Heart right ventricle (tissue), 16 donors: ENCODE measurements at regions of chr20 and their contacts with region 1.

Region 1: DNA sequence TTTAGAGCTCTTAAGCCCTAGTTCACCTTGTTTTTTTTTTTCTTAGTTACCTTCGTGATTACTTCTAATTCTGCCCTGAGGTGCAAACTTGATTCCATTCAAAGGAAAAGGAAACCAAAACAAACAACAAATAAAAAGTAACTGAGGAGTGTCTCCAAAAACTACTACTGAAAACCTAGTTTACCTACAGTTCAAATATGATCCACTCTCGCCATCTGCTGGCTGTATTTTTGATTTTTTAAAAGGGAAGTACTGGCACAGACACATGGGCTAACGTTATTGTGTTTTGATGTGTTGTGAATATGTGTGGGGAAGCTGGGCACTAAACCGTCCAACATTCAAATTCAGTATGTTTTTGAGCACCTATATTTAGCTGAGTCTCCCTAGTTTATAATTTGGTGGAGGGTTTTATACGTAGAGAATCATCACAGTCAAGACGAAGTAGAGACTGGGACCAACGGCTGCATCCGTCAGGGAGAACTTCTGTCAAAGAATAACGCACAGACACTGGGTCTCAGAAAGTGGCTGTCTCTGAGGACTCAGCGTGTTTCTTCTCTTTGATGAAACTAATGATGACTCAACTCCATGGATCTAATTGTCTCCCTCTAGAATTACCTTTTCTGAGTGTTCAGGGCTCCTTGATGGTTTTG is 373.5 kb upstream of the BTBD3 start:
- DNase-seq: peak in 1 of 2 donors; percentile 62
- ATAC-seq: peak in 5 of 8 donors; percentile 48 to 75 (median 74)
- H3K4me3 ChIP-seq: peak overlapping the region in 2 of 10 donors; percentile 5 to 10
- H3K27ac ChIP-seq: no peak overlapping the region
- H3K4me1 ChIP-seq: peaks cover 0 to 12% (median 0%) of the 10 kb centered on the region in 9 donors
- H3K27me3 ChIP-seq: peaks cover 0 to 3% (median 0%) of the 10 kb centered on the region in 7 donors
- CTCF ChIP-seq: peak in 8 of 9 donors; percentile 21 to 79 (median 66)

Region 2: GRCh38 chr20:9616833-9617489 is 1927.2 kb before region 1 on chr20:
- intact Hi-C with region 1: loop called in 7 of 10 experiments (anchors 5 to 10 kb)
- DNase-seq: peak; percentile 24 to 27
- ATAC-seq: peak in 6 of 8 donors; percentile 51 to 71 (median 64)
- H3K4me3 ChIP-seq: no peak overlapping the region
- H3K27ac ChIP-seq: no peak overlapping the region
- H3K4me1 ChIP-seq: no peaks in the 10 kb centered on the region
- H3K27me3 ChIP-seq: peaks cover 0 to 30% (median 7%) of the 10 kb centered on the region in 7 donors
- CTCF ChIP-seq: peak; percentile 51 to 91 (median 89)

Region 3: DNA sequence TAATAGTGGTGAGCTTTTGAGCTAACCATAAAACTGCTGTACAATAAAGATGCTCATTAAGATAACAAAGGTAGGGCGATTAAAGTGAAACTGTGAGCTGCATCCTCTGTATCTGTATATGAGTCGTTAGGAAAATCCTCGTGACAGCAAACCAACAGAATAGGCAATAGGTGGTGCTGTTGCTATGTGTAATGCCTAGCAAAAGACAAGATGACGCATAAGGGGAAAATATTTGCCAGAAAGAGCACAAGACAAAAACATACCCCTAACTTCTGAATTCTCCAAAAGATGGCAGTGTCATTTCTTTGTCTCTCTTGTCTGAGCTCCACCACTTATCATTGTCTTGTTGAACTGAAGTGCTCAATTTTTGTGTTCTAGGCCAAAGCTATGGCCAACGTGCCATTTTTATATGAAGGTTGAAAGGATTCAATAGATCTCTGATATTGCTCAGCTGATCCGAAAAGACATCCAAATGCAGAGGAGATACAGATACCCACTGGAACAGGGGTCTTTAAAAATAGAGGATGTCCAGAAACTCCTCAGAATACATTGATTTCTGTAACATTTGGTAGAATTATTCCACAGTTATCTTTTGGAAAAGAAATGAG is 1565.7 kb before region 1 on chr20:
- intact Hi-C with region 1: loop called in 9 of 10 experiments (anchors 2 to 10 kb)
- DNase-seq: peak in 1 of 2 donors; percentile 64
- ATAC-seq: peak in 7 of 8 donors; percentile 80 to 93 (median 83)
- H3K4me3 ChIP-seq: no peak overlapping the region
- H3K27ac ChIP-seq: no peak overlapping the region
- H3K4me1 ChIP-seq: peaks cover 0 to 6% (median 0%) of the 10 kb centered on the region in 9 donors
- H3K27me3 ChIP-seq: peaks cover 0 to 7% (median 0%) of the 10 kb centered on the region in 7 donors
- CTCF ChIP-seq: peak; percentile 53 to 94 (median 79)

Region 4: GRCh38 chr20:10476319-10476724 is 1067.8 kb before region 1 on chr20:
- intact Hi-C with region 1: loop called in 2 of 10 experiments (anchors 5 to 10 kb)
- DNase-seq: no peak
- ATAC-seq: peak in 6 of 8 donors; percentile 32 to 71 (median 48)
- H3K4me3 ChIP-seq: no peak overlapping the region
- H3K27ac ChIP-seq: no peak overlapping the region
- H3K4me1 ChIP-seq: peaks cover 0 to 44% (median 21%) of the 10 kb centered on the region in 9 donors
- H3K27me3 ChIP-seq: no peaks in the 10 kb centered on the region
- CTCF ChIP-seq: peak in 1 of 9 donors; percentile 22

Region 5: DNA sequence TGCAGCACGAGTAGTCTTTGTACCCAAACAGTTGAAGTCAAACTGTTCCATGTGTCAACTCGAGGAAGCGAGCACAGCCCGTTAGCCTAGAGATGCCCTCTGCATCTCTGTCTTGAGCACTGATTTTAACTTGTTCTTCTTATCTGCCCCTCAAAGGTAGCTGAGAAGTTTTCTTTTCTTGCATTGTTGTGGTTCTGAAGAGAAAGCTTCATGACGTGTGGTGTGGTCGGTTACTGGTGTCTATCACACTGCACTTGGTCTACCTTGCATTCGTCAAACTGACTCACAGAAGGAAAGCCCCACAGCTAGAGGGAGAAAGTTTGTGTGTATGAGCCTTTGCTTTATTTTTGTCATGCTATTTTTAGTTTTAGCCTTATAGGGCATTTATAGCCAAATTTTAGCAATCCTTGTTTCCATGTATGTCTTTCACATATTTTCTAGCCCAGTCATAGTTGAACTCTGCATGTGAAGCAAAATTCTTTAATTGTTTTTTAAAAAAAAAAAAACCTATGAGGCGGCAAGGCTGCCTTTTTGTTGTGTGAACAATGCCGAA is 985.4 kb before region 1 on chr20:
- intact Hi-C with region 1: loop called in 9 of 10 experiments (anchors 2 to 10 kb)
- DNase-seq: no peak
- ATAC-seq: peak in 3 of 8 donors; percentile 42 to 65 (median 47)
- H3K4me3 ChIP-seq: no peak overlapping the region
- H3K27ac ChIP-seq: peak overlapping the region in 4 of 10 donors; percentile 2 to 25 (median 16)
- H3K4me1 ChIP-seq: peaks cover 0 to 11% (median 0%) of the 10 kb centered on the region in 9 donors
- H3K27me3 ChIP-seq: no peaks in the 10 kb centered on the region
- CTCF ChIP-seq: peak in 3 of 9 donors; percentile 15 to 29 (median 24)

Region 6: DNA sequence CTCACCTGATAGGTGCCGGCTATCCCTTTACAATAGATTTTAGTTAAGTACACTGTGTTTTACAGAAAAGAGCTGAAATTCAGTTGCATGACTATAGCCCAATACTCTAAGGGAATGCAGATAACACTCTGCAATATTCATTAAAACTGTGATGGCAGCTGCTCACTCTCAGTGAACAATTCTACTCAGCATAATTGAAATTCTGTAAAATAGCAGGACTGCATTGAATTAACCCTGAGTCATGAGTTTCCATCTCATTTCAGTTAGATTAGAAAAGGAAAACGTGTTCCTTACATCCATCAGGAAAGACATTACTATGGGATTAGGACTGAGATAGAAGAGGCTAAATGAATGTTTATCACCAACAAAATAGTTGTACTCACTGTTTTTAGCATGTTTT is 257.0 kb before region 1 on chr20:
- intact Hi-C with region 1: loop called in 1 of 10 experiments (anchors 10 kb)
- DNase-seq: no peak
- ATAC-seq: no peak
- H3K4me3 ChIP-seq: no peak overlapping the region
- H3K27ac ChIP-seq: no peak overlapping the region
- H3K4me1 ChIP-seq: no peaks in the 10 kb centered on the region
- H3K27me3 ChIP-seq: no peaks in the 10 kb centered on the region
- CTCF ChIP-seq: no peak